ENCODE measurements at regions of chr4 and their contacts with region 1.

Region 1: DNA sequence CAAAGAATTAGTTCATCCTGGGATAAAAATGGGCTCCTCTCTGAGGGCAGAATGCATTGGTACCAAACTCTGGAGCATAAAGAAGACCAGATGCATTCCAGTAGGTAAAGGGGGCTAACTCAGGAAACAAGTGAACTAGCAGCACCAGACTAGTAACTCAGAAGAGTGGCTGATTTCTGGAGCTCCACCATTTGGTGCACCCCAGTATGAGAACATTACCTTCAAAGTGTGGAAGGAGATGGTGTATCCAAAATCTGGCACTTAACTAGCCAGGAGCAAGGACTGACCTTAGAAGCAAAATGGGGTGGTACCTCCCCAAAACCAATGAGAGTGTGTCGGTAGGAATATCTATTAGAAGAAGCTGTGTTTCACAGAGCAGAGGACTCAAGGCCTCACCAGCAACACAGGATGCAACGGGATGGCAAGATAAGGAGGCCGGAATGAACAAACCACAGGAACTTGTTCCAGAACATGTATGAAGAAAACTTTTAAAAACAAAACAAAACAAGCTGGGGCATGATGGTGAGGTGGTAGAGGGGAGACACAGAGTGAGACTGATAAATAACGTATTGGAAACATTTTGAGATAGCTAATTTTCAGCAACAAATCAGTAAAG is 142.3 kb downstream of the INPP4B start:
- DNase-seq: peak; percentile 62 to 77 (median 71)
- H3K4me3 ChIP-seq: peak overlapping the region; percentile 3 to 11
- H3K4me3 Mint-ChIP-seq: no peak overlapping the region
- H3K27ac ChIP-seq: peak overlapping the region; percentile 38
- H3K27ac Mint-ChIP-seq: no peak overlapping the region
- H3K4me1 ChIP-seq: peaks cover 95% of the 10 kb centered on the region
- H3K4me1 Mint-ChIP-seq: peaks cover 30 to 33% (median 31%) of the 10 kb centered on the region in 4 donors
- H3K27me3 ChIP-seq: no peaks in the 10 kb centered on the region
- H3K27me3 Mint-ChIP-seq: no peaks in the 10 kb centered on the region

Region 2: GRCh38 chr4:142574306-142574705 is 129.5 kb before region 1 on chr4:
- CTCF ChIA-PET with region 1: interaction called, 7 read pairs
- POLR2A ChIA-PET with region 1: interaction called, 166 read pairs
- intact Hi-C with region 1: no loop called
- DNase-seq: no peak
- H3K4me3 ChIP-seq: no peak overlapping the region
- H3K4me3 Mint-ChIP-seq: peak overlapping the region; percentile 21 to 71 (median 64)
- H3K27ac ChIP-seq: no peak overlapping the region
- H3K27ac Mint-ChIP-seq: peak overlapping the region; percentile 31 to 82 (median 76)
- H3K4me1 ChIP-seq: peaks cover 55% of the 10 kb centered on the region
- H3K4me1 Mint-ChIP-seq: peaks cover 45 to 70% (median 58%) of the 10 kb centered on the region in 4 donors
- H3K27me3 ChIP-seq: no peaks in the 10 kb centered on the region
- H3K27me3 Mint-ChIP-seq: no peaks in the 10 kb centered on the region

Region 3: GRCh38 chr4:142719854-142720541 is 16.2 kb after region 1 on chr4:
- CTCF ChIA-PET with region 1: interaction called, 12 read pairs
- POLR2A ChIA-PET with region 1: interaction called, 40 read pairs
- intact Hi-C with region 1: loop called (anchors 2 kb)
- DNase-seq: peak in 4 of 5 donors; percentile 54 to 60 (median 57)
- H3K4me3 ChIP-seq: no peak overlapping the region
- H3K4me3 Mint-ChIP-seq: peak overlapping the region in 5 of 8 donors; percentile 19 to 62 (median 49)
- H3K27ac ChIP-seq: no peak overlapping the region
- H3K27ac Mint-ChIP-seq: peak overlapping the region in 5 of 7 donors; percentile 36 to 77 (median 69)
- H3K4me1 ChIP-seq: peaks cover 14% of the 10 kb centered on the region
- H3K4me1 Mint-ChIP-seq: peaks cover 11 to 26% (median 13%) of the 10 kb centered on the region in 4 donors
- H3K27me3 ChIP-seq: no peaks in the 10 kb centered on the region
- H3K27me3 Mint-ChIP-seq: peaks cover 0 to 1% of the 10 kb centered on the region in 2 donors

Measured in CD4-positive, alpha-beta memory T cell (primary cell).